CD14-positive monocyte (primary cell): ENCODE measurements at regions of chr1 and their contacts with region 1.

Region 1: DNA sequence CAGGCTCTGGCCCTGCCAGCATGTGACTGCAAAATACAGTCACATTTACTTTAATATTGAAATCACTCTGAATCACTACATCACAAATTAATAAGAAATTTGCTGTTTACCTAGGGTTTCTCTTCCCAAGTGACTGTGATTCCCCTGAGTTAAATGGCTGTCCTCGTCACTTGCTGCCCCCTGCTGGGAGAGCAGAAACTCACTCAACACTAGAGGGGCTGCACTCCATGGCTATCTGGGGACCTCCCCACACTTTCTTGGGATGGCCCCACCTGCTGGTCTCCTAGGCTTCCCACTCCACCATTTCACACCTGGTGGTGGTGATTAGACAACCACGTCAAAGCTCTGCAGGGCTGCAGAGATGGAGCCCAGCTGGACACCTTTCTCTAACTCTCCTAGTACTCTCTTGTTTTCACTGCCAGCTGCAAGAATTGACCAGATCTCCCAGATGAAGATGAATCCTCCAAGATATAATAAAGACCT is 63.4 kb downstream of the CD2 start:
- DNase-seq: peak; percentile 30 to 61 (median 46)
- H3K4me3 ChIP-seq: no peak overlapping the region
- H3K4me3 Mint-ChIP-seq: no peak overlapping the region
- H3K27ac ChIP-seq: no peak overlapping the region
- H3K27ac Mint-ChIP-seq: no peak overlapping the region
- H3K4me1 ChIP-seq: no peaks in the 10 kb centered on the region
- H3K4me1 Mint-ChIP-seq: peaks cover 9% of the 10 kb centered on the region
- H3K27me3 ChIP-seq: no peaks in the 10 kb centered on the region
- H3K27me3 Mint-ChIP-seq: no peaks in the 10 kb centered on the region
- CTCF ChIP-seq: peak; percentile 90

Region 2: DNA sequence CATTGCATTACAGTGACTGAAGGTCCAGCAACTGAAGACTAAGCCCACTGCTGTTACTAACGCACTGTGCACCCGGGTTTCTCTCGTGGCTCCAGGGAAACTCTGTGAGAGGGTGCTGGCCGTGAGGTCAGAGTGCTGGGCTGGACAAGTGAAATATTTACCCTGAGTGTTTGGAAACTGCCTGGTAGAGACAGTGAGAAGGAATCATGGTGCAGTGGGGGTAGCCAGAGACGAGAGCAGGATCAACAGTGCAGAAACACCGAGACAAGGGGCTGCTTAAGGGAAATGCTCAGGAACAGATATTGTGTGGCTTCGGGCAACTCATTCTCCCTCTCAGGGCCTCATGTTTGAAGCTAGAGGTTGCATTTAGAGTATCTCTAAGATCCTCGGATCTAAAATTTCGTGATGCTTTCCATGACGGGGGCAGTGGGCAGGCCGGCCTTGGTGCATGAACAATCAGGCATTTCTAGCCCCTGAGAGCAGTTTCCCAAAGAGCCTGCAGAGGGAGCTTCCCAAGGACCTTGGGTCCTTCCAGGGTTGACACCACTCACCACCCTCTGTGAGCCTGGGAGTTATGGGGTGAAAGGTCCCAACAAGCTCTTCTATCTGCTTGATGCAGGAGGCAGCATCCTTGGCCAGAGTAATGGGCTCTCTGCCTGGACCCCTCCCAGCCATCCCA is 53.7 kb before region 1 on chr1:
- intact Hi-C with region 1: loop called in 1 of 2 experiments (anchors 10 kb)
- DNase-seq: no peak
- H3K4me3 ChIP-seq: no peak overlapping the region
- H3K4me3 Mint-ChIP-seq: no peak overlapping the region
- H3K27ac ChIP-seq: no peak overlapping the region
- H3K27ac Mint-ChIP-seq: peak overlapping the region in 2 of 7 donors; percentile 32 to 35
- H3K4me1 ChIP-seq: peaks cover 18 to 25% of the 10 kb centered on the region in 2 donors
- H3K4me1 Mint-ChIP-seq: peaks cover 49% of the 10 kb centered on the region
- H3K27me3 ChIP-seq: no peaks in the 10 kb centered on the region
- H3K27me3 Mint-ChIP-seq: peaks cover 0 to 4% (median 1%) of the 10 kb centered on the region in 3 donors
- CTCF ChIP-seq: peak; percentile 43